HepG2 (cell line): ENCODE measurements at regions of chr7 and their contacts with region 1.

Region 1: GRCh38 chr7:112505495-112505894 is 24.7 kb downstream of the LSMEM1 start:
- DNase-seq: peak; percentile 24
- ATAC-seq: no peak
- H3K4me3 ChIP-seq: no peak overlapping the region
- H3K27ac ChIP-seq: no peak overlapping the region
- H3K4me1 ChIP-seq: peaks cover 32% of the 10 kb centered on the region
- H3K27me3 ChIP-seq: peaks cover 1 to 15% of the 10 kb centered on the region in 2 experiments; a peak in 3 of 5 replicates
- CTCF ChIP-seq: no peak
- EP300 ChIP-seq: no peak
- POLR2A ChIP-seq: no peak
- RAD21 ChIP-seq: no peak

Region 2: GRCh38 chr7:112484671-112485097 is 20.8 kb before region 1 on chr7:
- CTCF ChIA-PET with region 1: no interaction called
- POLR2A ChIA-PET with region 1: no interaction called
- in situ Hi-C with region 1: no loop called
- intact Hi-C with region 1: loop called (anchors 1 kb)
- DNase-seq: peak; percentile 68
- ATAC-seq: no peak
- H3K4me3 ChIP-seq: no peak overlapping the region
- H3K27ac ChIP-seq: no peak overlapping the region
- H3K4me1 ChIP-seq: peaks cover 8% of the 10 kb centered on the region; the same call in 1 of the 2 replicates
- H3K27me3 ChIP-seq: no peaks in the 10 kb centered on the region
- CTCF ChIP-seq: no peak
- EP300 ChIP-seq: no peak; a peak in 1 of 4 replicates
- POLR2A ChIP-seq: no peak
- RAD21 ChIP-seq: no peak

Region 3: DNA sequence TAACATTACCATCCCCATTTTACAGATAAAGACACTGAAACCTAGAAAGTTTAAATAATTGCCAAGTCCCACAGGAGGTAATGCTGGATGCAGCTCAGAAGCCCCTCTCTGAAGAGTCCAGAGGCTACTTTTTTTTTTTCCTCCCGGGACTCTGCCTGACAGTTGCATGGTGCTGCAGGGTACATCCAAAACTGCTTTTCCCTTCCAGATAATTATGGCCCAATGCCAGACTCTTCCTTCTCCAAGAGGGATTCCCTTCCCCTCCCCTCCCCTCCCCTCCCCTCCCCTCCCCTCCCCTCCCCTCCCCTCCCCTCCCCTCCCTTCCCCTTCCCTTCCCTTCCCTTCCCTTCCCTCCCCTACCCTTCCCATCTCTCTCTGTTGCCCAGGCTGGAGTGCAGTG is 98.2 kb after region 1 on chr7:
- CTCF ChIA-PET with region 1: no interaction called
- POLR2A ChIA-PET with region 1: no interaction called
- in situ Hi-C with region 1: no loop called
- intact Hi-C with region 1: no loop called
- DNase-seq: no peak
- ATAC-seq: no peak
- H3K4me3 ChIP-seq: no peak overlapping the region
- H3K27ac ChIP-seq: no peak overlapping the region
- H3K4me1 ChIP-seq: no peaks in the 10 kb centered on the region
- H3K27me3 ChIP-seq: peaks cover 0 to 4% of the 10 kb centered on the region in 2 experiments; a peak in 3 of 5 replicates
- CTCF ChIP-seq: no peak
- EP300 ChIP-seq: no peak
- POLR2A ChIP-seq: no peak
- RAD21 ChIP-seq: no peak

Region 4: DNA sequence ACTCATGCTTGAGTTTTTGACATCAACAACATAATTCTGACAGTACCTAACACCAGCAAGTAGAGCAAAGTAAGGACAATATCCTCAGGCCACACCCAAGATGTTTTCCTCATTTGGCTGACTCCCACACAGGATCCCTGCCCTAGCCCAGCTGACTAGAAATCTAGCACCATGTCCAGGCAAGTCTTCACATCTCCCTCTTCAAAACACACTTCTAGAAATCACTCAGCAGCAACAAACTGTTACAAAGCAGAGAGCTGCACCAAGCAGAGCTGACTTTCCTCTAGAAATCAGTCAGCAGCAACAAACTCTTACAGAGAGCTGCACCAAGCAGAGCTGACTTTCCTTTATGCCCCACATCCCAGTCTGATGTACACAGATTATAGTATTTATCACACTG is 277.0 kb after region 1 on chr7:
- CTCF ChIA-PET with region 1: no interaction called
- POLR2A ChIA-PET with region 1: no interaction called
- in situ Hi-C with region 1: no loop called
- intact Hi-C with region 1: no loop called
- DNase-seq: no peak
- ATAC-seq: no peak
- H3K4me3 ChIP-seq: no peak overlapping the region
- H3K27ac ChIP-seq: no peak overlapping the region
- H3K4me1 ChIP-seq: no peaks in the 10 kb centered on the region
- H3K27me3 ChIP-seq: no peaks in the 10 kb centered on the region
- CTCF ChIP-seq: no peak
- EP300 ChIP-seq: no peak
- POLR2A ChIP-seq: no peak
- RAD21 ChIP-seq: no peak